ENCODE measurements at regions of chr5 and their contacts with region 1.

Region 1: GRCh38 chr5:30405821-30406220 is 787.7 kb upstream of the CDH6 start:
- DNase-seq: no peak
- H3K4me3 ChIP-seq: no peak overlapping the region
- H3K27ac ChIP-seq: no peak overlapping the region
- H3K4me1 ChIP-seq: no peaks in the 10 kb centered on the region
- H3K27me3 ChIP-seq: no peaks in the 10 kb centered on the region
- CTCF ChIP-seq: no peak

Region 2: GRCh38 chr5:29750385-29750784 is 655.4 kb before region 1 on chr5:
- intact Hi-C with region 1: no loop called
- DNase-seq: no peak
- H3K4me3 ChIP-seq: no peak overlapping the region
- H3K27ac ChIP-seq: no peak overlapping the region
- H3K4me1 ChIP-seq: no peaks in the 10 kb centered on the region
- H3K27me3 ChIP-seq: no peaks in the 10 kb centered on the region
- CTCF ChIP-seq: no peak

Region 3: DNA sequence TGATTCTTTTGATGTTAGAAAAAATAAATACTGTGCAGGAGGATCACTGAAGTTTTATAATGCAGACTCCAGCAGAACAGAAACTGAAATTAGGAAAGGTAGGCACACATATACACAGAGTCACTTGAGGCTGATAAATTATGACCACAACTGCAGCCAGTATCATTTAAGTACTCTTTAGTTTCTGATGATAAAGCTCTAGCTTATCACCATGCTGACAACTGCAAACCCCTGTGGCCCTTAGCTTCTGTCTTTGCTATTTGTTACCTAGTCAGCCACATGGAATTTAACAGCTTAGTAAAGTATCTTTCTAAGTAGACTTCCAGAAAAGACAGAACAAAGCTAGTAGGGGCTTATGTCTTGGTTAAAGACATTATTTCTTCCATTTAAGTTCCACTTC is 52.9 kb after region 1 on chr5:
- intact Hi-C with region 1: no loop called
- DNase-seq: no peak
- H3K4me3 ChIP-seq: no peak overlapping the region
- H3K27ac ChIP-seq: no peak overlapping the region
- H3K4me1 ChIP-seq: no peaks in the 10 kb centered on the region
- H3K27me3 ChIP-seq: no peaks in the 10 kb centered on the region
- CTCF ChIP-seq: no peak

Region 4: DNA sequence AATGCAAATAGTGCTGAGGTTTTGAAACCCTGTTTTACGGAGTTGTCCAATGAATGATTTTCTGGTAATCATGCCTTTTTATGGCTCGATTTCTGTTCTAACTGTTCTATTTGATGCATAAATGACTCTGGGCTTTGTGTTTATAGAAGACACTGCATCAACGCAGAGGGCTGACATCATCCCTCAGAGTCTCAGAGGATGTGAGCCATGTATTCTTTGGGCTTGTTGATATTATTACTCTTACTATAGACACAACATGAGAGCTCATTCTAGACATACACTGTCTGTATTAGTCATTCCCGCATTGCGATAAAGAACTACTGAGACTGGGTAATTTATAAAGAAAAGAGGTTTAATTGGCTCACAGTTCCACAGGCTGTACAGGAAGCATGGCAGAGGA is 819.3 kb after region 1 on chr5:
- intact Hi-C with region 1: loop called (anchors 5 kb)
- DNase-seq: no peak
- H3K4me3 ChIP-seq: no peak overlapping the region
- H3K27ac ChIP-seq: no peak overlapping the region
- H3K4me1 ChIP-seq: no peaks in the 10 kb centered on the region
- H3K27me3 ChIP-seq: no peaks in the 10 kb centered on the region
- CTCF ChIP-seq: no peak

Region 5: GRCh38 chr5:31244921-31245320 is 839.1 kb after region 1 on chr5:
- intact Hi-C with region 1: loop called (anchors 5 kb)
- DNase-seq: no peak
- H3K4me3 ChIP-seq: no peak overlapping the region
- H3K27ac ChIP-seq: no peak overlapping the region
- H3K4me1 ChIP-seq: no peaks in the 10 kb centered on the region
- H3K27me3 ChIP-seq: no peaks in the 10 kb centered on the region
- CTCF ChIP-seq: no peak

Measured in colonic mucosa (tissue), 4 donors.